ENCODE measurements at regions of chr1 and their contacts with region 1.

Region 1: DNA sequence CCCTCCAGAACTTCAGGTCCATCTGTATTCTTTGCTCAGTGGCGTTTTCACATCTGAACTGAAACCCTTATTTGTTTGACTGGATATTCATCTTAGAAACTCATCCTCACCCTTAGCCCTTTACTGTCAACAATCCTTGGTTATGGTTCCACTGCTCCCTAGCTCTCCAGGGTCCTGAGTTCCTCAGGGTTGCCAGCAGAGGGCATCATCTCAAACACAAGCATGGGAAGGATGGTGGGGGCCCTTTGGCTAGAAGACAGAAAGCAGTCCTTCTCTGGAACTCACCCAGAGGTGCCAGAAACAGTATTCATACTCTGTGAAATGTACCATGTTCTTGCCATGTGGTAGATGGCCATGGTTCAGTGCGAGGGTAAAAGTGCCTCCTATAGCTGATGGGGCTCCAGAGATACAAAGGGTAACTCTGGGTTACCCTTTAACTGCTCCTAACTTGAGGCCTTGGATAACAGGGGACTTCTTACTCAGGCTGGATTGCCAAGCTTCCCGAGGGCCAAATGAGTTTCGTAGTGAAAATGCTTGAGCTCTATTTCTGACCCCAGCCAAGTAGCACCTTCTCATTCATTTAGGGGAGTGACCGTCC is 11.3 kb downstream of the NCSTN start:
- DNase-seq: no peak
- H3K4me3 ChIP-seq: no peak overlapping the region
- CTCF ChIP-seq: peak; percentile 63

Region 2: DNA sequence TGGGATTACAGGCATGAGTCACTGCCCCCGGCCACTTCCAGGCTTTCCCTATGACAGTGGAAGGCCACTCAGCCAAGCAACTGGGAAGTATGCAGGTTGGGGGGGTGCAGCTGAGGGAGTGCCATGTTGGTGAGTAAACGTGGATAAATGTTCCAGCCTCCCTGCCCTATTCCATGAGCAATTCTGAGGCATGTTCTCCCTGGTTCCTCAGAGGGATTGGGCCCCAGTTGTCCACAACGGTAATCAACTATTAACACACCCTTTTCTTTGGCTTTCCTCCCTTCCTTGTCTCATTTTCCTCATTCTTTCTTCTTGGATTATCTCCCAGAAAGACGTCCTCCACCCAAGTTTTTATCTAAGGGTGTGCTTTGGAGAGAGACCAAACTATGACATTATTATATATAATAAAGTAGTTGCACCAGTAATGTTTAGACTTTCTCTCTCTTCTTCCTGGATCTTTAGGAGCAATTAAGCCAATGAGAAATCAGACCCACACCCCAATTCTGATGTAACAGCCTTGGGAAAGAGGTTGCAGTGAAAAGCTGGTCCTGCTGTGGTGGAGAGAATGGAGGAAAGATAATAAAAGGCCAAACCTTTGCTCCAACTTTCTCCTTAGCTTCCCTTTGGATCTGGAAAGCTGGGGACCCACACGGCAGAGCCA is 393.6 kb before region 1 on chr1:
- CTCF ChIA-PET with region 1: no interaction called
- POLR2A ChIA-PET with region 1: no interaction called
- DNase-seq: peak; percentile 41
- H3K4me3 ChIP-seq: peak overlapping the region; percentile 26
- CTCF ChIP-seq: no peak

Region 3: DNA sequence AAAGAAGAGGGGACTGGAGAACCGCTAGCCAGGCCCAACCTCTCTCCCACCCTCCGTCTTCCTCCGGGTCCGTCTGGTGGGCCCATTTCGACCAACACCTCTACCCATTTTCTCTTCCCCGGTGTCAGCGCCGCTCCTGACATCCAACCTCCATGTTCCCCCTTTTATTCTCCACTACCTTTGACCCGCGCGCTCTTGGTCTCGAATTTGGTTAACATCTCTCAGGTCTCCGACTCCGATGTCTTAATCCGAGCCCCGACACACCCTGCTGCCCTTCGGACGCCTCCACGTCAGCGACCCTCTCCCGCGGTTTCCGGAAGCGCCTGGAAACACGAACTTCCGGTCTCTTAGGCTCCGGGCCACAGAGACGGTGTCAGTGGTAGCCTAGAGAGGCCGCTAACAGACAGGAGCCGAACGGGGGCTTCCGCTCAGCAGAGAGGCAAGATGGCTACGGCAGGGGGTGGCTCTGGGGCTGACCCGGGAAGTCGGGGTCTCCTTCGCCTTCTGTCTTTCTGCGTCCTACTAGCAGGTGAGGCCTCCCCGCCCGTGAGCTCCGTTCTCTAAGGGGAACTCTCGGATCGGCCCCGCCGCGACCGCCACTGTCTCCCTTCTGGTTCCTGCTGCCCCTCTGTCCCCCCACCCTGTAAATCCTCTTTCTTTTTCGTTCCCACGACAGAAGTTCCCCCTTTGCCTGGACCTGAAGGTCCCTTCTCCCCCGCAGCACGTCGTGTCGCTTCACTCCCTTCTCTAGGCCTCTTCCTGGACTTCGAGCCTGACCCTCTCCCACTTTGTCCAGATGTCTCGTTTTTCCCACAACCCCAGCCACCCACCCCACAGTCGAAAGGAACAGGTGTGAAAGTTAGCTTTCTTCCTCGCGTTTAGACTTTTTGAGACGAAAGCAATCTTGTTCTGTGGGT is 11.3 kb before region 1 on chr1 and contains the starts of genes COPA and NCSTN:
- CTCF ChIA-PET with region 1: interaction called, 23 read pairs
- POLR2A ChIA-PET with region 1: no interaction called
- DNase-seq: peak; percentile 84
- H3K4me3 ChIP-seq: peak within 1 kb of the TSS; percentile 93
- CTCF ChIP-seq: no peak

Region 4: GRCh38 chr1:160376525-160377131 is 22.1 kb after region 1 on chr1:
- CTCF ChIA-PET with region 1: interaction called, 277 read pairs
- POLR2A ChIA-PET with region 1: no interaction called
- DNase-seq: no peak
- H3K4me3 ChIP-seq: no peak overlapping the region
- CTCF ChIP-seq: peak; percentile 84

Measured in AG04449 (cell line).